Right lobe of liver (tissue), 6 donors: ENCODE measurements at regions of chr20 and their contacts with region 1.

Region 1: DNA sequence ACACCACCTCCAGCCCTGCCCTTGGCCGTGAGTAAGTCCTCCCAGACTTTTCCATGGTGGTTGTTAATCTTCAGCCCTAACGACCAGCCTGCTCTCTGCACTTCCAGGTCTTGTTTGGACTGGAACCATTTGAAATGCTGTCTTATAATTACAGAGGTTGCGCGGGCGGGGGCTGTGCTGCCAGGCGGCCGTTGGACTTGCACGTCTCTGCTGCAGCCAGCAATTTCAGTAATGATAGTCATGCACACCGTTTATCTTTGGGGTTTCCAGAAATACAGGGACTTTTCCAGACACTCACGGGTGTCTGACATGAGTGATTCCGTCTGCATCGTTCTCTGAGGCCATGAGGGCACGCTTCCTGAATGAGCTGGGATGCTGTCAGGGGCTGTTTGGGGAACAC is 118.2 kb downstream of the BMP7 start:
- DNase-seq: no peak
- ATAC-seq: no peak
- H3K4me3 ChIP-seq: no peak overlapping the region
- H3K27ac ChIP-seq: no peak overlapping the region
- H3K4me1 ChIP-seq: no peaks in the 10 kb centered on the region
- H3K27me3 ChIP-seq: no peaks in the 10 kb centered on the region
- CTCF ChIP-seq: no peak
- POLR2A ChIP-seq: no peak

Region 2: GRCh38 chr20:57236813-57237584 is 88.7 kb after region 1 on chr20:
- intact Hi-C with region 1: loop called in 1 of 2 experiments (anchors 5 kb)
- DNase-seq: no peak
- ATAC-seq: no peak
- H3K4me3 ChIP-seq: no peak overlapping the region
- H3K27ac ChIP-seq: no peak overlapping the region
- H3K4me1 ChIP-seq: no peaks in the 10 kb centered on the region
- H3K27me3 ChIP-seq: no peaks in the 10 kb centered on the region
- CTCF ChIP-seq: no peak
- POLR2A ChIP-seq: no peak